Ovary (tissue), 10 donors: ENCODE measurements at regions of chr5 and their contacts with region 1.

Region 1: GRCh38 chr5:115888027-115888426 is 46.3 kb downstream of the AP3S1 start:
- DNase-seq: no peak
- H3K4me3 ChIP-seq: no peak overlapping the region
- H3K27ac ChIP-seq: no peak overlapping the region
- H3K4me1 ChIP-seq: peaks cover 2% of the 10 kb centered on the region
- H3K27me3 ChIP-seq: no peaks in the 10 kb centered on the region
- CTCF ChIP-seq: peak in 2 of 3 donors; percentile 28 to 43
- EP300 ChIP-seq: no peak
- POLR2A ChIP-seq: no peak

Region 2: DNA sequence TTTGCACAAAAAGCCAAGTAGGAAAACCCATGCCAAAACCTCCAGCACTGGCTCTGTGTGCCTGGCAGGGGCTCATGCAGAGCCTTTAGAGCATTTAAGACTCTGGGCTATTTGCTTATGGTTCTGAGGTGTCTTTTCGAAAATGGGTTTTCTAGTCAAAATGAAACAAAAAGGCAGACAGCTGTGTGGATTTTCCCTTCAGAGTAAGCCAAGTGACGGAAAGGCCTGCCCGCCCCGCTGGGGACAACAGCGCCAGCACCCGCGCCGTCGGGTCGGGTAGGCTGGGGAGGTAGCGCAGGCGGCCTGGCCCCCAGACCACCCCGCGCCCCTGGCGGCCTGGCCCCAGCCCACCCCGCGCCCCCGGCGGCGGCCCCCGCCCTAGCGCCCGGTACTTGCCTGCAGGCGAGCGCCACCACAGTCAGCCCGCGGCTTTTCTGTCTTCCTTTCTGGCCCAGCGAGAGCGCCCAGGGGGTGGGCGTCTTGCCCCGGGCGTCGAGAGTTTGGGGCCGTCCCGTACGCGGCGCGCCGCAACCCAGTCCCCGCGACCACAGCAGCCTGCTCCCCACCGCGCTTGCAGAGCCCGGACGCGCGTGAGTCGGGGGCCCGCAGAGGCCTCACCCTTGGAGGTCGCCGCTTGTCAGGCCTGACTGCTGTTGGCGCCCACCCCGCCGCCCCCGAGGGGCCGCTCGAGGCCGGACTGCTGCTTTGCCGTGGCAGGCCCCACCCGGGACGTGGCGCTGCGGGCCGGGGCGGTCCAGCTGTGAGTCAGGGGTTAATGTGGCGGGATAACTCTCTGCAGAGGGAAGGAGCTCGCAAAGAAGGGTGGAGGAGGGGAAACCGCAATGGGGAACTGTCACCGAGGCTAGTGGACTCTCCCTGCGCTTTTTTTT is 286.1 kb before region 1 on chr5 and contains the start of gene TICAM2:
- intact Hi-C with region 1: no loop called
- DNase-seq: peak; percentile 59 to 76 (median 69)
- H3K4me3 ChIP-seq: peak within 1 kb of the TSS; percentile 59
- H3K27ac ChIP-seq: peak within 1 kb of the TSS; percentile 55 to 91
- H3K4me1 ChIP-seq: peaks cover 4% of the 10 kb centered on the region
- H3K27me3 ChIP-seq: no peaks in the 10 kb centered on the region
- CTCF ChIP-seq: peak in 1 of 3 donors; percentile 16
- EP300 ChIP-seq: no peak
- POLR2A ChIP-seq: no peak
- total RNA-seq, gene TICAM2: 1.0 to 6.4 (median 4.9) TPM

Region 3: GRCh38 chr5:115798252-115798651 is 89.8 kb before region 1 on chr5:
- intact Hi-C with region 1: no loop called
- DNase-seq: no peak
- H3K4me3 ChIP-seq: no peak overlapping the region
- H3K27ac ChIP-seq: no peak overlapping the region
- H3K4me1 ChIP-seq: no peaks in the 10 kb centered on the region
- H3K27me3 ChIP-seq: no peaks in the 10 kb centered on the region
- CTCF ChIP-seq: no peak
- EP300 ChIP-seq: no peak
- POLR2A ChIP-seq: no peak

Region 4: DNA sequence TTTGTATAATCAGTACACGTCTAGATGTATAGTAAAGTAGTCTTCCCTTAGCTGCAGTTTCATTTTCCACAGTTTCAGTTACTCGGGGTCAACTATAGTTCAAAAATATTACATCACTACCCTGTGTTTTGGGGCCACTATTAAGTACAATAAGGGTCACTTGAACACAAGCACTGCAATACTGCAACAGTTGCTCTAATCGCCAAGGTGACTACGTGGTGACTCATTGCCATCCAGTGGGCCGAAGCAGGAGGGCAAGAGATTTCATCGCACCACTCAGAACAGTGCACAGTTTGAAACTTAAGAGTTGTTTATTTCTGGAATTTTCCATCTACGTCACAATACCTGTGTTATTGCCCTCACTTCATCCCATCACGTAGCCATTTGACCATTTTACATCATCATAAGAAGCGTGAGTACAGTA is 144.1 kb after region 1 on chr5 and contains the start of gene ARL14EPL:
- intact Hi-C with region 1: no loop called
- DNase-seq: peak in 4 of 5 donors; percentile 15 to 42 (median 31)
- H3K4me3 ChIP-seq: no peak within 1 kb of the TSS
- H3K27ac ChIP-seq: no peak within 1 kb of the TSS
- H3K4me1 ChIP-seq: no peaks in the 10 kb centered on the region
- H3K27me3 ChIP-seq: no peaks in the 10 kb centered on the region
- CTCF ChIP-seq: no peak
- EP300 ChIP-seq: no peak
- POLR2A ChIP-seq: no peak
- total RNA-seq, gene ARL14EPL: not detected

Region 5: DNA sequence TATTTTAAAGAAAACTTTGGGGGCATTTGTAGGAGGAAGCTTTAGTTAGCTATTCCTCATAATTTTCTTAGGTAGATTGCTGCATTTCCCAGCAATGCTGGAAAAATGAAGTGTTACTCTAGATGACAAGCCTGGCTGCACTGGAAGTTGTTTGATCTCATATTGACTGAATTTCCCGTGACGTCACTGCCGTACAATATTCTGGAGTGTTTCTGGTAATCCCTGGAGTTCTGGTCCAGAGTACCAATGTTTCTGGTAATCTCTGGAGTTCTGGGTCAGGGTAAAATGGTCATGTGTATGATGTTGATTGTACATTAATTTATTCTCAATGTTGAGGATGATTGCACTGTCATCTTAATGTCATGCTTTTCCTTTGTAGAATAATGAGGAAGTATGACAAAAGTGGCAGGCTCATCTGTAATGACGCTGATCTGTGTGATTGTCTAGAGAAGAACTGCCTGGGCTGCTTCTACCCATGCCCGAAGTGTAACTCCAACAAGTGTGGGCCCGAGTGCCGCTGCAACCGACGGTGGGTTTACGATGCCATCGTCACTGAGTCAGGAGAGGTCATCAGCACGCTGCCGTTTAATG is 170.4 kb after region 1 on chr5:
- intact Hi-C with region 1: loop called in 2 of 4 experiments (anchors 10 kb)
- DNase-seq: no peak
- H3K4me3 ChIP-seq: no peak overlapping the region
- H3K27ac ChIP-seq: no peak overlapping the region
- H3K4me1 ChIP-seq: no peaks in the 10 kb centered on the region
- H3K27me3 ChIP-seq: no peaks in the 10 kb centered on the region
- CTCF ChIP-seq: no peak
- EP300 ChIP-seq: no peak
- POLR2A ChIP-seq: no peak

Region 6: DNA sequence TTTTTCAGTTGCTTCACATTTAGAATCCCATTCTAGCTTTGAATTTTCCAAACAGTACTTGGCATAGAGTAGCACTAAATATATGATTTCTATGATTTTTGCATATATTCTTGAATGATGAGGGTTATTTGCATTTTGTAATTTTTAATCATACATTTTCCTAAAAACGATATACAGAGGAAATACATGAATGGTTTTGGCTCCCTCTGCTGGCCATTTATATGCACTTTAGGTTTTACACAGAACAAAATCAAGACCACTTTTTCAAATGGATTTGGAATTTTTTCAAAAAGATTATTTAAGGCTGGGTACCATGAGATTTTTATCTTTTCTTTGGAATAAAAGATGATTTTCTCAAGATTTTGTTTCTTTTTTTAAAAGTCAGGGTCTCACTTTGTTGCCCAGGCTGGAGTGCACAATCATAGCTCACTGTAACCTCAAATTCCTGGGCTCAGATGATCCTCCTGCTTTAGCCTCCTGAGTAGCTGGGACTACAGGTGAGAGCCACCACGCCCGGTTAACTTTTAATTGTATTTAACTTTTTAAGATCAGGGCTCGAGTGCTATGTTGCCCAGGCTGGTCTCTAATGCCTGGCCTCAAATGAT is 180.1 kb after region 1 on chr5:
- intact Hi-C with region 1: loop called in 2 of 4 experiments (anchors 5 to 10 kb)
- DNase-seq: peak in 1 of 5 donors; percentile 52
- H3K4me3 ChIP-seq: no peak overlapping the region
- H3K27ac ChIP-seq: no peak overlapping the region
- H3K4me1 ChIP-seq: no peaks in the 10 kb centered on the region
- H3K27me3 ChIP-seq: no peaks in the 10 kb centered on the region
- CTCF ChIP-seq: peak; percentile 60 to 83 (median 68)
- EP300 ChIP-seq: no peak
- POLR2A ChIP-seq: no peak